ENCODE measurements at regions of chr13 and their contacts with region 1.

Region 1: DNA sequence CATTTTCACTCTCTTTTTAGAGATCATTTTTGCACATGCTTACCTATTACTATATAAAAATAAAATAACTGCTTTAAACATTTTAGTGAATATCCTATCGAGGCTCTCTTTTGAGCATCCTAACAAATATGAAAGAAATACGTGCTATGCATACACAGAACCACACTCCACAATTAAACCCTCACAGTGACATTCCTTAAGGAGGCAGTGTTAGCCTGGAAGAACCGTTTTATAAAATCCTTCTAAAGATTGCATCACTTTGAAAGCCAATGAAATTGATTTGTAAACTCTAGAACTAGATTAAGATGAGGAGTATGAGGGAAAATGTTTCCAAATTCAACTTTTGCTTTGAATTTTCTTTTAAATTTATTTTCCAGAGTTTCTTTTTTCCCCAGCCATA is 11.1 kb upstream of the ENOX1 start:
- DNase-seq: no peak
- ATAC-seq: no peak
- H3K4me3 ChIP-seq: no peak overlapping the region
- H3K27ac ChIP-seq: no peak overlapping the region
- H3K4me1 ChIP-seq: peaks cover 0 to 8% (median 0%) of the 10 kb centered on the region in 12 donors
- H3K27me3 ChIP-seq: no peaks in the 10 kb centered on the region
- CTCF ChIP-seq: no peak
- POLR2A ChIP-seq: no peak

Region 2: GRCh38 chr13:42594970-42595571 is 1202.8 kb before region 1 on chr13:
- intact Hi-C with region 1: loop called in 7 of 10 experiments (anchors 5 to 10 kb)
- DNase-seq: peak in 3 of 5 donors; percentile 23 to 37 (median 30)
- ATAC-seq: peak in 2 of 4 donors; percentile 50 to 63
- H3K4me3 ChIP-seq: no peak overlapping the region
- H3K27ac ChIP-seq: no peak overlapping the region
- H3K4me1 ChIP-seq: no peaks in the 10 kb centered on the region
- H3K27me3 ChIP-seq: peaks cover 0 to 27% (median 2%) of the 10 kb centered on the region in 9 donors
- CTCF ChIP-seq: peak; percentile 78 to 89 (median 85)
- POLR2A ChIP-seq: no peak

Region 3: GRCh38 chr13:43629691-43630480 is 168.0 kb before region 1 on chr13:
- intact Hi-C with region 1: no loop called
- DNase-seq: no peak
- ATAC-seq: no peak
- H3K4me3 ChIP-seq: no peak overlapping the region
- H3K27ac ChIP-seq: no peak overlapping the region
- H3K4me1 ChIP-seq: peaks cover 0 to 3% (median 0%) of the 10 kb centered on the region in 12 donors
- H3K27me3 ChIP-seq: peaks cover 0 to 2% (median 0%) of the 10 kb centered on the region in 9 donors
- CTCF ChIP-seq: no peak
- POLR2A ChIP-seq: no peak

Region 4: DNA sequence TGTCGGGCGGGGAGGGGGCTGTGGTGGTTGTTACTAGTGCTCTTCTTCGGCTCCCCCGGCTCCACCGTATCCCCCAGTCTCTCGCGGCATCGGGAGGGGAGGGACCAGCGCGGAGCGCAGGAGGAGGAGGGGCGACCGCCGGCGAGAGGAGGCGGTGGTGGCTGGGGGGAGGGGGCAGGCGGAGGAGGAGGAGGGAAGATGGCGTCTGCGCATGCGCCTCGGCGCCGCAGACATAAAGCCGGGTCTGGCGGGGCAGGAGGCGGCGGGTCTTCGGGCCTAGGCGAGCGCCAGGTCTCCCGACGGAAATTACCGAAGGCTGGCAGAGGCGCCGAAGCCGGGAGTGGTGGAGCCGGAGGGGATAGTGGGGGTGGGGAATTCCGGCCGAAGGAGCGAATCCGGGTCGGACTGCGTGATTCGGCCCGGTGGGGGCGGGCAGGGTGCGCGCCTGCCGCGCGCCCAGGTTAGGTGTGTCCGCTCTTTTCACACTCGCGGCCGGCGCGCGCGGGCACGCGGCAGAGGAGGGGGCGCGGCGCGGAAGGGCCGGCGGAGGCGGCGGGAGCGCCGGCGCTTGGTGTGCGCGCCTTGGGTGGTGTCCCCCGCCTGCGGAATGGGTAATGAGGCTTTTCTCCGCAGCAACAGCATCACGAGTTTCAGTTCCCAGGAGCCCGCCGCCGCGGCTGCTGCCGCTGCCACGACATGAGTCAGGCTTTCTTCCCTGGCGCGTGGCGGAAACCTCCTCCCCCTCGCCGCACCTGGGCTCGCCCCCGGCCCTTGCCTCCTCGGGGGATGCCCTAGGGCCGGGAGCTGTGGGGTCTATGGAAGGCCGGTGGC is 779.6 kb after region 1 on chr13:
- intact Hi-C with region 1: no loop called
- DNase-seq: peak; percentile 97 to 98 (median 98)
- ATAC-seq: peak; percentile 92 to 94 (median 92)
- H3K4me3 ChIP-seq: peak overlapping the region; percentile 72 to 98 (median 94)
- H3K27ac ChIP-seq: peak overlapping the region; percentile 92 to 99 (median 97)
- H3K4me1 ChIP-seq: peaks cover 0 to 43% (median 36%) of the 10 kb centered on the region in 12 donors
- H3K27me3 ChIP-seq: no peaks in the 10 kb centered on the region
- CTCF ChIP-seq: no peak
- POLR2A ChIP-seq: peak in 1 of 2 donors; percentile 74